Activated T-helper 1 cell treated with anti-CD3 and anti-CD28 coated beads, Interleukin-12 subunit alpha, Interleukin-12 subunit beta, Interleukin-2, Interleukin-4 antibody, amounts not matched to agents 30 ng/mL and 10 ng/mL and 1 ng/mL, durations not matched to agents 14 hours and 24 hours and 36 hours (primary cell): ENCODE measurements at regions of chr2 and their contacts with region 1.

Region 1: GRCh38 chr2:179422037-179422643 is 157.5 kb upstream of the SESTD1 start:
- DNase-seq: peak; percentile 11
- H3K4me3 Mint-ChIP-seq: no peak overlapping the region
- H3K27ac Mint-ChIP-seq: no peak overlapping the region
- H3K4me1 Mint-ChIP-seq: no peaks in the 10 kb centered on the region
- H3K27me3 Mint-ChIP-seq: peaks cover 18% of the 10 kb centered on the region

Region 2: GRCh38 chr2:177970670-177971454 is 1451.3 kb before region 1 on chr2:
- intact Hi-C with region 1: no loop called
- DNase-seq: no peak
- H3K4me3 Mint-ChIP-seq: no peak overlapping the region
- H3K27ac Mint-ChIP-seq: no peak overlapping the region
- H3K4me1 Mint-ChIP-seq: no peaks in the 10 kb centered on the region
- H3K27me3 Mint-ChIP-seq: no peaks in the 10 kb centered on the region

Region 3: GRCh38 chr2:179440642-179441251 is 18.6 kb after region 1 on chr2:
- intact Hi-C with region 1: loop called (anchors 2 kb)
- DNase-seq: no peak
- H3K4me3 Mint-ChIP-seq: no peak overlapping the region
- H3K27ac Mint-ChIP-seq: no peak overlapping the region
- H3K4me1 Mint-ChIP-seq: no peaks in the 10 kb centered on the region
- H3K27me3 Mint-ChIP-seq: peaks cover 15% of the 10 kb centered on the region

Region 4: GRCh38 chr2:179898873-179899272 is 476.7 kb after region 1 on chr2:
- intact Hi-C with region 1: loop called (anchors 5 kb)
- DNase-seq: no peak
- H3K4me3 Mint-ChIP-seq: no peak overlapping the region
- H3K27ac Mint-ChIP-seq: no peak overlapping the region
- H3K4me1 Mint-ChIP-seq: no peaks in the 10 kb centered on the region
- H3K27me3 Mint-ChIP-seq: no peaks in the 10 kb centered on the region